Sciatic nerve (tissue), 2 donors: ENCODE measurements at regions of chr11 and their contacts with region 1.

Region 1: DNA sequence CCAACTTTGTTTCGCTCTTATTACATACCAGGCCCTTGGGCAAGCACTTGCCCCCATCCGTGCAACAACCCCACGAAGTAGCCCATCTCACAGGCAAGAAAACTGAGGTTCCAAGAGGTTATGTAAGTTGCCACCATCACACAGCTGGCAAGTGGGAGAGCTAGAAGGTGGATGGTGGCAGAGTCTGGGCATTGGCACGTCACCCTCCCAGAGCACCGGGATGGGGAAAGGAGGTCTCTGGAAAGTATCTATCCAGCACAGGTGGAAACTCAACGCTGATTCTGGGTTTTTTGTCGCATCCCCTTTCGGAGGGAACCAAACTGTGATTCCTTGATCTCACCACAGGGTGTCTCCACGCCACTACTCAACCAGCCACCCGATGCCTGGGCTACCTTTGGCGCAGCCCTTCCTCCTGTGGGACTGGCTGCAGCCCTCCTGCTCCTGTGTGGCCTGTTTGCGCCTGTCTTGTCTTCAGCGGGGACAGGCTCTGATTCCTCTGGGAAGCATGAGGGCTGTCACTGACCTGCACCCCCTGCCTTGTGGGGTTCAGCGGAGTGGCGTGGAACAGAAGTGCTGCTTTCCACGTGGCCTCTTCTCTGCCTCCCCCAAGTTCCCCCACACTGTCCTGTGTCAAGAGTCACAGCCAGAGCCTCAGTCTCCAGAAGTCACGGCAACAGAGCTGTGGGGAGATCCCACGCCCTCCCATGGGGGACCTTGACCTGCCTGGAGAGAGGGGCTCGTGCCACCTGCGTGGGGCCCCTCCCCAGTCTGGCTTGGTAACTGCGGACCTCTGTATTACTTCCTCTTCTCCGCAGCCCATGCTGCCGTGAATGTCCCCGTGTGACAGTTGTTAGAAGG is 34.4 kb upstream of the TRIM29 start:
- DNase-seq: peak; percentile 84
- ATAC-seq: peak; percentile 78

Region 2: DNA sequence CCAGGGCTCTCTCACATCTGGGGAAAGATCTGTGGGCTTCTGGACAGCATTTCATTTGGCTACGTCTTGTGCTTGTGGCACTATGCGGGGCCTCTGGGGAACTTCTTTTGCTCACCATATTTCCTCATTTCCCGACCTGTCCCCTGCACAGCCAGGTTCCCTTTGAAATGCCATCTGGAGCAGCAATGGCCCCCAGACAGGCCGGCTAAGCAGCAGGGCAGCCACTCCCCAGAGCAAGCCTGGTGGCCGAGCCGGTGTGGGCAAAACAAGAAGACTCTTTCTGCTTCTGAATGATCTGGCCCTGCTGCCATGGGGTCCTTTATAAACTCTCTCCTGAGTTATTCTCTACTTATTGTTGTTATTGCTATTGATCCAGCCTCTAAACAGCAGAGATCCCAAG is 252.6 kb before region 1 on chr11:
- intact Hi-C with region 1: no loop called
- DNase-seq: no peak
- ATAC-seq: no peak

Region 3: GRCh38 chr11:120229451-120230424 is 57.5 kb after region 1 on chr11:
- intact Hi-C with region 1: loop called (anchors 5 kb)
- DNase-seq: no peak
- ATAC-seq: peak; percentile 23

Region 4: GRCh38 chr11:120295084-120295483 is 122.8 kb after region 1 on chr11:
- intact Hi-C with region 1: loop called (anchors 5 kb)
- DNase-seq: no peak
- ATAC-seq: no peak

Region 5: GRCh38 chr11:120801801-120802689 is 629.8 kb after region 1 on chr11:
- intact Hi-C with region 1: no loop called
- DNase-seq: peak; percentile 82
- ATAC-seq: peak; percentile 76